ENCODE measurements at regions of chr20 and their contacts with region 1.

Region 1: DNA sequence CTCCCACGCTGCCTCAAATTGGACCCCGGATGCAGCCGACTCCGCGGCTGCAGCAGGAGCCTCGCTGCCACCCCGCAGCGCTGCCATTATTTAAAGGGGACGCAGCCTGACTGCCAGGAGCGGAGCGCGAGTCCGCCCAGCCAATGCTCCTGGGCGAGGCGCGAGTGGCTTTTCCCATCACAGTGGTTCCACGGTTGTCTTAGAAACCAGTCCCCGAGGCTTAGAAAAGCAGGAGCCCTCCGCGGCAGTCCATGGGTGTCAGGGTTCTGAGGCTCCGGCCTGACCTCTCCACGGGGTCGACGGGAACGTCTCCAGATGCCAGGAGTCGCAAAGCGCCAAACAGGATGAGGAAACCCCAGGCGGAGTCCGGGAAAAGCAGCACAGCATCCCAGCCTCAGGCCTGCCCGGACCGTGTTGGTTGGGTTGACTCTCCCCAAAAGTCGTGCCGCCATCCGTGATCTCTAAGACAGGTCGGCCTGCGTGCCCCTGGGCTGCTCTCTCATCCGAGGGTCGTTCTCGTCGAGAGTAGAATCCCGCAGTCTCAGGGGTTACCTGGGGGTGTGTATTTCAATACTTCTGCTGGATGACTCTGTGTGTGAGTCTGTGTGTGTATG is 975.8 kb upstream of the DEFB115 start:
- DNase-seq: no peak
- H3K4me3 ChIP-seq: no peak overlapping the region
- H3K4me3 Mint-ChIP-seq: no peak overlapping the region
- H3K27ac ChIP-seq: no peak overlapping the region
- H3K27ac Mint-ChIP-seq: no peak overlapping the region
- H3K4me1 ChIP-seq: peaks cover 24% of the 10 kb centered on the region
- H3K4me1 Mint-ChIP-seq: peaks cover 2 to 53% (median 11%) of the 10 kb centered on the region in 4 donors
- H3K27me3 ChIP-seq: no peaks in the 10 kb centered on the region
- H3K27me3 Mint-ChIP-seq: no peaks in the 10 kb centered on the region

Region 2: GRCh38 chr20:30168025-30168799 is 113.5 kb before region 1 on chr20:
- CTCF ChIA-PET with region 1: no interaction called
- POLR2A ChIA-PET with region 1: no interaction called
- intact Hi-C with region 1: no loop called
- DNase-seq: peak in 3 of 5 donors; percentile 8 to 31 (median 9)
- H3K4me3 ChIP-seq: no peak overlapping the region
- H3K4me3 Mint-ChIP-seq: no peak overlapping the region
- H3K27ac ChIP-seq: no peak overlapping the region
- H3K27ac Mint-ChIP-seq: no peak overlapping the region
- H3K4me1 ChIP-seq: no peaks in the 10 kb centered on the region
- H3K4me1 Mint-ChIP-seq: peaks cover 0 to 6% (median 2%) of the 10 kb centered on the region in 4 donors
- H3K27me3 ChIP-seq: no peaks in the 10 kb centered on the region
- H3K27me3 Mint-ChIP-seq: no peaks in the 10 kb centered on the region

Region 3: DNA sequence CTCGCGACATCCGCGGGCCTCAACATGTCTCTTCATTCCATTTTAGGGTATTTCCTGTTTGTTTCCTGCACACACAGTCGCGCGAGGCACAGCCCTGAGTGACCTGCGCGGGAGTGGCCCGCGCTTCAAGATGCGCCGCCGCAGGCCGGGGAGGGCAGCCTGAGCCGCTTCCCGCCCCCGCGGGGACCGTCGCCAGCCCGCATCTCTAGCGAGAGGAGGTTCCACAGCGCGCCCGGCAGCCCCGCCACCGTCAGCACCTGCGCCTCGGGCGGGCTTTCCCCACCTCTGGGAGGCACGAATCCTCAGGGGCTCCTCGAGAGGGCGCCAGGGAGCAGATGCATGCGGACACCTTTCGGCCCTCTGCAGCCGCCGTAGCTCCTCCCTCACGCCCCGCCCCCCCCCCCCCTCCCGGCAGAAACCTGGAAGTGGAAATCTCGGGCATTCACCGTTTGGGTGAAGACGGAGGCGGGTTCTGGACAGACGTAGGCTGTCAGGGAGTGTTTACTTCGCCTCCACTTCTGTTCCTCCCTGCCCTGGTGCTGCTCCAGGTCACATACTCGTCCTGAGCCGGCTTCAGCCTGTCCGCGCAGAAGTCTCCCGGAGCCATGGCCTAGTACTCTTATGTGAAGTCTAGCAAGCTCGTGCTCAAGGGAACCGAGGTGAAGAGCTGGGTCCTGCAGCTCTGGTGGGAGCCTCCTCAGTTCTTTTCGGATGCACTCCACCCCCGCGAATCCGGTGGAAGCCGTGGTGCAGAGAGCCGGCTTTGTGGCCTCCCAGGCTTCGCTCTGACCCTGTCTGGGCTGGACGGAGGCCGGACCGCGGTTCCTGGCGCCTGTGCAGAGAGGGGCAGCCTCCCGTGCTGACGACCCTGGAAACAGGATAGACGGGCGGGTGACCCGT is 95.3 kb after region 1 on chr20:
- CTCF ChIA-PET with region 1: no interaction called
- POLR2A ChIA-PET with region 1: no interaction called
- intact Hi-C with region 1: loop called (anchors 2 kb)
- DNase-seq: peak; percentile 49 to 94 (median 92)
- H3K4me3 ChIP-seq: peak overlapping the region; percentile 82 to 84
- H3K4me3 Mint-ChIP-seq: peak overlapping the region; percentile 13 to 97 (median 87)
- H3K27ac ChIP-seq: peak overlapping the region; percentile 91
- H3K27ac Mint-ChIP-seq: peak overlapping the region in 6 of 7 donors; percentile 83 to 100 (median 96)
- H3K4me1 ChIP-seq: peaks cover 8% of the 10 kb centered on the region
- H3K4me1 Mint-ChIP-seq: peaks cover 7 to 50% (median 18%) of the 10 kb centered on the region in 4 donors
- H3K27me3 ChIP-seq: no peaks in the 10 kb centered on the region
- H3K27me3 Mint-ChIP-seq: no peaks in the 10 kb centered on the region